GM10248 (cell line): ENCODE measurements at regions of chr3 and their contacts with region 1.

Region 1: DNA sequence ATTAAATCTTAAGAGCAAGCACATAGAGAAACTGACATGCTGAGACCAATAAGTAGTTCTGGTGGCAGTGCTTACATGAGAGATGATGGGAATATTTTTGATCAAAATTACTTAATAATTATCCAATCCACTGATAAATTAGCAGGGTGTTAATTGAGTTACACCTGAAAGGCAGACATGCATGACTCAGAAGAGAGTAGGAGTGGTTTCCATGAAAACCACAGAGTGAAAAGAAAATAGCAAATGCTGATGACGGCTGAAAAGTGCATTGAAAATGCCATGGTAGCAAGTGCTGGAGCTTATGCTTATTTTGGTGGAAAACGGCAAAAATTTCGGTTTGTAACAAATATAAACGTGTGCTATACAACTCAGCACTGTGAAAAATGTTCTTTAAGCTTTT is 267.8 kb upstream of the LRRN1 start:
- DNase-seq: no peak
- CTCF ChIP-seq: no peak

Region 2: DNA sequence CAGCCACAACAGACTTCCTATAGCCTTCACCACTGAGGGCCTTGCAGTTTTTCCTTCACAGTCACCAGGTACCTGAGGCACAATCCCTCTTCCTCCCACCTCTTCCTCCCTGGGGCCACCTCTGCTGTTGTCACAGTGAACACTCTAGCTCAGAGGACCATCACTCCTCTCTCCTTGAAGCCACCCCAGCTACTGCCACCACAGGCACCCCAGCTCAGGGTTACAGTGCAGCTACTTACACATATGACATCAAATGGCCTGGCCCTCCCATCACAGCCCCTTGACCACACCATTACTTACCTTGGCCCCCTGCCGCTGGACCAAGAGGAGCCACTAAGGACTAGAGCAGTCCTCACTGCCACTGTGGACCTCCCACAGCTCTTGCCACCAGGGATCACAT is 138.5 kb before region 1 on chr3:
- CTCF ChIA-PET with region 1: no interaction called
- POLR2A ChIA-PET with region 1: no interaction called
- DNase-seq: no peak
- CTCF ChIP-seq: no peak

Region 3: GRCh38 chr3:3516996-3517395 is 14.5 kb before region 1 on chr3:
- CTCF ChIA-PET with region 1: interaction called, 13 read pairs
- POLR2A ChIA-PET with region 1: no interaction called
- DNase-seq: no peak
- CTCF ChIP-seq: no peak

Region 4: GRCh38 chr3:3545360-3545759 is 13.9 kb after region 1 on chr3:
- CTCF ChIA-PET with region 1: no interaction called
- POLR2A ChIA-PET with region 1: no interaction called
- DNase-seq: no peak
- CTCF ChIP-seq: no peak